Gastrocnemius medialis (tissue), 4 donors: ENCODE measurements at regions of chr11 and their contacts with region 1.

Region 1: GRCh38 chr11:14892036-14892567 is at the start of gene CYP2R1:
- DNase-seq: peak; percentile 92 to 96
- ATAC-seq: peak; percentile 95 to 96
- H3K4me3 ChIP-seq: peak within 1 kb of the TSS; percentile 75 to 97 (median 87)
- H3K27ac ChIP-seq: peak within 1 kb of the TSS; percentile 87 to 94 (median 89)
- H3K4me1 ChIP-seq: peaks cover 9 to 21% of the 10 kb centered on the region in 2 donors
- H3K27me3 ChIP-seq: no peaks in the 10 kb centered on the region
- CTCF ChIP-seq: no peak
- POLR2A ChIP-seq: peak in 1 of 2 donors; percentile 20
- total RNA-seq, gene CYP2R1: 4.6 to 9.2 (median 4.8) TPM

Region 2: DNA sequence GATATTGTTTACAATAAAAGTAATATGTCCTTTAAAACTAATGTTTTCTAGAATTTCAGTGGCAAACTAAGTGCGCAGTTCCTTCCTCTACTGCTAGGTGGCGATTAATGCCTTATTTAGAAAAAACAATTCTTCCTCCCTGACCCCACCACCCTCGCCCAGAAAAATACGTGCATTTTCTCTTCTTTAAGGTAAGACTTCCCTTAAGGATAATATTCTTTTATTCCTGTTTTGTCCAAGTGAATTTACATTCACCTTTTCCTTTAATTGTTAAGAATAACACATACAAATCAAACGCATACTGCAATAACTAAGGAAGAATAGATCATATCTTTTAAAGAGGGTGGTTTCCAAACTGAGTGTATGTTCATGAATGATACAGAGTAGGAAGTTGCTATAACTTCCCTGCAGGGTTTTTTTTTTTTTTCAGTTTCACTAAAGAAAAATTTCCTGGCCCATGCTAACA is 354.9 kb before region 1 on chr11:
- in situ Hi-C with region 1: loop called in 1 of 4 experiments (anchors 25 kb)
- intact Hi-C with region 1: no loop called
- DNase-seq: no peak
- ATAC-seq: no peak
- H3K4me3 ChIP-seq: no peak overlapping the region
- H3K27ac ChIP-seq: no peak overlapping the region
- H3K4me1 ChIP-seq: no peaks in the 10 kb centered on the region
- H3K27me3 ChIP-seq: no peaks in the 10 kb centered on the region
- CTCF ChIP-seq: peak; percentile 18 to 63 (median 31)
- POLR2A ChIP-seq: no peak

Region 3: DNA sequence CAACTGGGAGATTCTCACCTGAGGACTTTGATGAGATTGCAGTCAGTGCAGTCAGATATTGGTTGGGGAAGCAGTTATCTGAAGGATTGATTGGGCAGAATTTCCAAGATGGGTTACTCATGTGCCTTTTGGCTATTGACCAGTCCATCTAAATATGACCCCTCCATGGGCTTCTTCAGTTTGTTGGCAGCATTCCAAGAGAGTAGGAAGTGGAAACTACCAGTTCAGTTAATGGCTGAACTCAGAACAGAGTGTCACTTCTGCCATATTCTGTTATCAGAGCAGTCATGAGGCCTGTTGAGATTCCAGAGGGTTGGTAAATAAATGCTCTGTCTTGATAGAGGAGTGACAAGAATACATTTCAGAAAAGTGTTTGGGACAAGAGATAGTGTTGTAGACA is 71.1 kb before region 1 on chr11:
- in situ Hi-C with region 1: no loop called
- intact Hi-C with region 1: no loop called
- DNase-seq: no peak
- ATAC-seq: no peak
- H3K4me3 ChIP-seq: no peak overlapping the region
- H3K27ac ChIP-seq: no peak overlapping the region
- H3K4me1 ChIP-seq: no peaks in the 10 kb centered on the region
- H3K27me3 ChIP-seq: no peaks in the 10 kb centered on the region
- CTCF ChIP-seq: no peak
- POLR2A ChIP-seq: no peak

Region 4: GRCh38 chr11:14942745-14943144 is 50.6 kb after region 1 on chr11:
- in situ Hi-C with region 1: no loop called
- intact Hi-C with region 1: no loop called
- DNase-seq: no peak
- ATAC-seq: no peak
- H3K4me3 ChIP-seq: no peak overlapping the region
- H3K27ac ChIP-seq: no peak overlapping the region
- H3K4me1 ChIP-seq: no peaks in the 10 kb centered on the region
- H3K27me3 ChIP-seq: no peaks in the 10 kb centered on the region
- CTCF ChIP-seq: no peak
- POLR2A ChIP-seq: no peak

Region 5: DNA sequence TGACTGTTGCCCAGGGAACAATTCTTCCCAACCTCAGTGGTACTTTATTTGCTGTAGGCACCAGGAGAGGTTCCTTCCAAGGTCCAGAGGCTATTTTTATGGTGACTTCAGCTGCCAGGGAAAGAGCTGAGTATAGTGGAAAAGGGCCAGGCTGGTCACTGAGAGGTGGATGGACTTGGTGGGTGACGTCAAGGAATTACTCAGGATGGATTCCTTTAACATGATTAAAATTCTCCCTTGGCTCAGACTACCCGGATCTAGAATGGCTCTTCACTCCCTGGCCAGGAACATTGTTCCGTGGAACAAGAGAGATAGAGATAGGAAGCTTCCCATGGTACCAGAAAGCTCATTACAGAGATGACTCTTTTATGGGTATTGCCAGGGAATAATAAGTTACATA is 88.8 kb after region 1 on chr11:
- in situ Hi-C with region 1: no loop called
- intact Hi-C with region 1: loop called (anchors 2 kb)
- DNase-seq: peak in 1 of 2 donors; percentile 47
- ATAC-seq: peak; percentile 85 to 95
- H3K4me3 ChIP-seq: no peak overlapping the region
- H3K27ac ChIP-seq: peak overlapping the region in 1 of 4 donors; percentile 59
- H3K4me1 ChIP-seq: peaks cover 15 to 16% of the 10 kb centered on the region in 2 donors
- H3K27me3 ChIP-seq: peaks cover 11 to 16% (median 15%) of the 10 kb centered on the region in 3 donors
- CTCF ChIP-seq: no peak
- POLR2A ChIP-seq: no peak